CD4-positive, alpha-beta T cell (primary cell): ENCODE measurements at regions of chr2 and their contacts with region 1.

Region 1: GRCh38 chr2:50401772-50402653 is 629.9 kb downstream of the NRXN1 start:
- DNase-seq: peak in 3 of 14 experiments; percentile 6 to 18 (median 9)
- ATAC-seq: no peak
- H3K4me3 ChIP-seq: no peak overlapping the region
- H3K4me3 Mint-ChIP-seq: no peak overlapping the region
- H3K27ac ChIP-seq: no peak overlapping the region
- H3K27ac Mint-ChIP-seq: no peak overlapping the region
- H3K4me1 ChIP-seq: no peaks in the 10 kb centered on the region
- H3K4me1 Mint-ChIP-seq: no peaks in the 10 kb centered on the region
- H3K27me3 ChIP-seq: no peaks in the 10 kb centered on the region
- H3K27me3 Mint-ChIP-seq: no peaks in the 10 kb centered on the region
- CTCF ChIP-seq: no peak

Region 2: DNA sequence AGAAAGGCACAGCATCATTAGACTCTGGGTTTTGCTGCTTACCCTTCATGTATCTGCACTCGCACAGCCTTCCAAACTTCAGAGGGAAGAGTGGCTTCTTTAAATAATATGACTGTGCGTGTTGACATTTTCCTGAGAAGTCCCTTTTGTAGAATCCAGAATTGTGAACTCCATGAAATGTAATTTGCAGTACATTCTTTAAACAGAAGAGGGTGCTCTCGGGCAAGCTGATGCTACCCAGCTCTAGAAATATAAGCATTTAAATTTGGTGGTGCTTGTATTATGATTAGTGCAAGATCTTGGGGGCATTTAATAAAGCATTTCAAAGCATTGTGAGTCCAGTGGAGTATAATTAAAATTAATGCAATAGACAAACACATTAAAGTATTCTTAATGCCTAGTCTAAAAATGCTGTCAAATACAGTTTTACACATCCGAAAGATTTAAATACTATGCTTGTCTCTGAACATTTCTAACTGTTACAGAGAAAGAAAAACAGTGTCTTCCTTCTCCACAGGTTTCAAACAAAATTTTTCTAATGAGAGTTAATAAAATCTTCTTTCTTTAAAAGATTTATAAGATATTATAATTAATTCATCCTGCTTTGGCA is 1801.7 kb before region 1 on chr2:
- CTCF ChIA-PET with region 1: no interaction called
- POLR2A ChIA-PET with region 1: no interaction called
- intact Hi-C with region 1: loop called in 1 of 2 experiments (anchors 10 kb)
- DNase-seq: peak in 3 of 14 experiments; percentile 8 to 28 (median 19)
- ATAC-seq: no peak
- H3K4me3 ChIP-seq: no peak overlapping the region
- H3K4me3 Mint-ChIP-seq: no peak overlapping the region
- H3K27ac ChIP-seq: no peak overlapping the region
- H3K27ac Mint-ChIP-seq: no peak overlapping the region
- H3K4me1 ChIP-seq: no peaks in the 10 kb centered on the region
- H3K4me1 Mint-ChIP-seq: no peaks in the 10 kb centered on the region
- H3K27me3 ChIP-seq: no peaks in the 10 kb centered on the region
- H3K27me3 Mint-ChIP-seq: no peaks in the 10 kb centered on the region
- CTCF ChIP-seq: peak; percentile 73

Region 3: DNA sequence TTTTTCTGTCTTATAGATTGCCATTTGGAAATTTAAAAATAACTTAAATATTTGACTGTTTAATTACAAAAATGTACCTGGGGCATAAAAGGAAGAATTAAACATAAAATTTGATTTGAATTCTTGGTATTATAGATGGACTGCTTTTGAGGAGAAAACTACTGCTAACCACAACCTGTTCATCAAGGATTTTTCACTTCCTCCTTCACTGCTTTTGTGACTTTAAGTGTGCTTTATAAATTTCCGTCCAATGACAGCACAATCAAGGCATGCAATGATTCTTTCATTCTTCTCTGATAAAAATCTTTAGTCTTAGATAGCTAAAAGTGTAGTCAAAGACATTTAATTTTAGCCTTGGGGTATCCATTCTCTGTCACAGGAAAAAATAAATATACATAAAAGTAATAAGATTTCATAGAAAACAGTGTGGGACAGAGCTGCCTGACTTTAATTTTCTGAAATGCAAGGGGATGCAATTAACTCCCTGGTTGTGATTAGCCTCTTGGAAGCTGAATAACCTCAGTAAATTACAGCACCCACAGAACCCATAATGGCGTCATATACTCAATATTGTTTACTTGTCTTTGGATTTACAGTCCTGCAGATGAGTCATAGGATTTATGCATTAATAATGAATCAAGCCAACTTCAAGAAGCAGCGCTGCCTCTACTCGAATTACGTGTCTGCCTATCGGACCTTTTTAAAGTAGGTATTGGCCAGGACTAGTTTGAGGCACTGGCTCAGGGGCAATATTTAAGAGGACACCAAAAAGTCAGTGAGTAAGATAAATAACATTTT is 42.1 kb after region 1 on chr2:
- CTCF ChIA-PET with region 1: no interaction called
- POLR2A ChIA-PET with region 1: no interaction called
- intact Hi-C with region 1: no loop called
- DNase-seq: no peak
- ATAC-seq: no peak
- H3K4me3 ChIP-seq: no peak overlapping the region
- H3K4me3 Mint-ChIP-seq: no peak overlapping the region
- H3K27ac ChIP-seq: no peak overlapping the region
- H3K27ac Mint-ChIP-seq: no peak overlapping the region
- H3K4me1 ChIP-seq: no peaks in the 10 kb centered on the region
- H3K4me1 Mint-ChIP-seq: no peaks in the 10 kb centered on the region
- H3K27me3 ChIP-seq: no peaks in the 10 kb centered on the region
- H3K27me3 Mint-ChIP-seq: no peaks in the 10 kb centered on the region
- CTCF ChIP-seq: no peak